Activated T-helper 1 cell treated with anti-CD3 and anti-CD28 coated beads, Interleukin-12 subunit alpha, Interleukin-12 subunit beta, Interleukin-2, Interleukin-4 antibody, amounts not matched to agents 30 ng/mL and 10 ng/mL and 1 ng/mL, durations not matched to agents 14 hours and 24 hours and 36 hours (primary cell): ENCODE measurements at regions of chr1 and their contacts with region 1.

Region 1: GRCh38 chr1:239997515-239998311 is 94.0 kb upstream of the FMN2 start:
- DNase-seq: no peak
- H3K4me3 Mint-ChIP-seq: no peak overlapping the region
- H3K27ac Mint-ChIP-seq: no peak overlapping the region
- H3K4me1 Mint-ChIP-seq: no peaks in the 10 kb centered on the region
- H3K27me3 Mint-ChIP-seq: peaks cover 27% of the 10 kb centered on the region

Region 2: GRCh38 chr1:240092301-240093119 is 94.8 kb after region 1 on chr1:
- intact Hi-C with region 1: loop called (anchors 5 kb)
- DNase-seq: no peak
- H3K4me3 Mint-ChIP-seq: no peak overlapping the region
- H3K27ac Mint-ChIP-seq: no peak overlapping the region
- H3K4me1 Mint-ChIP-seq: no peaks in the 10 kb centered on the region
- H3K27me3 Mint-ChIP-seq: peaks cover 29% of the 10 kb centered on the region